Head of caudate nucleus (tissue), 42 donors: ENCODE measurements at regions of chr19 and their contacts with region 1.

Region 1: DNA sequence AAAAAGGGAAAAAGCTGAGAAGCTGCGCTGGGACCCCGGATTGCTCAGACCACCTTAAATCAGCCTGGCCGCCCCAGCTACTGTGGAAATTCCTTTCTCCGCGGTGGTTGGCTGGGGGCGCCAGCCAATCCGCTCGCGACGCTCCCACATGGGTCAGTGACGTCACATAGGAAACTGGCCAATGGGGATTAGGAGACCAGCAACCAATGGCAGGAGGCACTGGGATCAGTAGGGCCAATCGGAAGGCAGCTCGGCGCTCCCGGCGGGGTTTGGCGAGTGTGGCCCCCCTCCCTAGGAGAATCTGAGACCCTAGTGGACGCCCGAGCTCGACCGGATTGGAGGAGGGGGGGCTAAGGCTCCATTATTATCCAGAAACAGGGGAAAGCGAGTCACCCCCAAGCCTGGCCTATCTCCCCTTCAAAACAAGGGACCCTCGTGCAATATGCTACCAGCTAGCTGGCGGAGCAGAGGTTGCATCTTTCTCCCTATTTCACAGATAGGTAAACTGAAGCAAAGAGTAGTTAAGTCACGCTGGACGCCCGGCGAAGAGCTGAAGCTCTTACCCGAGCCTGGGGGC is 6.5 kb upstream of the TLE2 start:
- DNase-seq: peak; percentile 91 to 99 (median 96)

Region 2: DNA sequence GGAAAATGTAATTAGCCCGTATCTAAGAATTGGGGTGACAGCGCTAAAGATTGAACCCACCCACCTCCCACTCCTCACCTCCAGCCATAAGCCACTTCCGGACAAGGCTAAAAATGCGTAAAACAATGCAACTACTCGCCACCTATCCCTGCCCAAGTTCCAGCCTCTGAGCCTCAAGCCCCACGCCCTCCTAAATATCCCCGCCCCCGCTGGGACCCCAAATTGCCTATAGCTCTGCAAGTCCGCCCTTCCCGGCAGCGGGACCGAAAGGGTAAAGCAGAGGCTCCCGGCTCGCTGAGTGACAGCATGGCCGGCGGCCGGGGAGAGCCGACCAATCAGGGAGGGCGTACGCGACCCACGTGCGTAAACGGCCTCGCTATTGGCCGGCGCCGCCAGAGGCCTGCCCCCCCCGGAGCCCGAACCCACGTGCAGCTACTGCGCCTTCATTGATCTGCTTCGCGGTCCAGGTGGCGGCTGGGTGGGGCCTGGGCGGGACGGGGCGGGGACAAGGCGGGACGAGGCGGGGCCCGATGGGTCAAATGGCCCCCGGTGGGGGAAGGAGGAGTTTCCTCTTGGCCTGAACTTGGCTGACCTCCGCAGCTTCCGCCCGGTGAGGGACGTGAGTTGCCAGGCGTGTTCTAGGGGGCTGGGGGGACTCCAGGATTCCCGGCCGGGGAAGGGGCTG is 58.5 kb before region 1 on chr19 and contains the start of gene TLE6:
- intact Hi-C with region 1: loop called (anchors 10 kb)
- DNase-seq: peak; percentile 86 to 98 (median 93)

Region 3: GRCh38 chr19:3154957-3155736 is 119.5 kb after region 1 on chr19:
- intact Hi-C with region 1: no loop called
- DNase-seq: peak in 23 of 42 donors; percentile 16 to 69 (median 44)